ENCODE measurements at regions of chr9 and their contacts with region 1.

Region 1: DNA sequence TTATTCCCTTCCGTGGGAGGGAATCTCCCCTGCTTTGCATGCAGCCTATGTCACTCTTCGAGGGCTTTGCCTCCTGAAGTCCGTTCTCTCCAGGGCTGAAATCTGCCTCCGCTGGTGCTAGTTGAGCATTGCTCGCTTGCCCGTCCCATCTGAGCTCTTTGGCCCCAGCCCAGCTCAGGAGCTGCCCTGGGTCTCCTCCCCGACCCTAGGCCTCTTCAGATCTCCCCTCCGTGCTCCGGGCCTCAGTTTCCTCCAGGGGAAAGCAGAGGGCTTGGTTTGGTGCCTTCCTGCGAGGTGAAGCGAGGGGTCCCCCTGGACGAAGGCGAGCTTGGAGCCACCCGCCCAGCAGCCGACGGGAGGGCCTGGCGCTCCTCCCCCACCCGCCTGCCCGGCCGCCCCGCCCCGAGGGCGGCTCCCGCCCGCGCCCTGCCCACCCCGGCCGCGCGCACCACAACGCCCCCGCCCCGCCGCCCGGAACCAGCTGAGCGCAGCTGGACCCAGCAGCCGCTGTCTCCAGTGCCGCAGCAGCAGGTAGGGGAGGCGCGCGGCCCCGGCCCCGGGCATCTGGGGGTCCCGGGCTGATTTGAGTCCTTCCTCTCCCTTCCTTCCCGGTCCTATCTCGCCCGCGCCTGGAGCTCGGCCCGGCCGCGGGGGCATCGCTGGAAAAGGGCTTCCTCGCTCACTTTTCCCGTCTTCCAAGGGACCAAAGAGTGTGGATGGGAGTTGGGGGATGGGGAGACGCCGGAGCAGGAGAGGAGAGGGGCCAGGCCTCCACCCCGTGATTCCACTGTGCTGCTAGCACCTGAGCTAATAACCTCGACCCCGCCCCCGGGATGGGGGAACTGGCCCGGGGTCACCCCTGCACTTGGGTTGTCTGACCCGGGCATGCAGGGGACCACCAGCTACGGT is at the start of gene GSN:
- DNase-seq: peak; percentile 72
- H3K4me3 Mint-ChIP-seq: peak within 1 kb of the TSS; percentile 69
- H3K27ac Mint-ChIP-seq: no peak within 1 kb of the TSS
- H3K4me1 Mint-ChIP-seq: peaks cover 16% of the 10 kb centered on the region
- H3K27me3 Mint-ChIP-seq: peaks cover 62% of the 10 kb centered on the region

Region 2: GRCh38 chr9:120642129-120642770 is 625.7 kb before region 1 on chr9:
- CTCF ChIA-PET with region 1: no interaction called
- DNase-seq: no peak
- H3K4me3 Mint-ChIP-seq: no peak overlapping the region
- H3K27ac Mint-ChIP-seq: no peak overlapping the region
- H3K4me1 Mint-ChIP-seq: no peaks in the 10 kb centered on the region
- H3K27me3 Mint-ChIP-seq: no peaks in the 10 kb centered on the region

Region 3: GRCh38 chr9:121169094-121169601 is 98.8 kb before region 1 on chr9:
- CTCF ChIA-PET with region 1: no interaction called
- DNase-seq: peak; percentile 34
- H3K4me3 Mint-ChIP-seq: no peak overlapping the region
- H3K27ac Mint-ChIP-seq: peak overlapping the region; percentile 80
- H3K4me1 Mint-ChIP-seq: peaks cover 19% of the 10 kb centered on the region
- H3K27me3 Mint-ChIP-seq: no peaks in the 10 kb centered on the region

Region 4: GRCh38 chr9:121278535-121279261 is 10.8 kb after region 1 on chr9:
- CTCF ChIA-PET with region 1: interaction called, 25 read pairs
- DNase-seq: peak; percentile 55
- H3K4me3 Mint-ChIP-seq: no peak overlapping the region
- H3K27ac Mint-ChIP-seq: no peak overlapping the region
- H3K4me1 Mint-ChIP-seq: peaks cover 5% of the 10 kb centered on the region
- H3K27me3 Mint-ChIP-seq: peaks cover 20% of the 10 kb centered on the region

Measured in activated naive CD4-positive, alpha-beta T cell treated with anti-CD3 and anti-CD28 coated beads, Interleukin-2, amount 10 ng/mL, durations not matched to agents 7 days and 5 days (primary cell).